Spleen (tissue), 13 donors: ENCODE measurements at regions of chr2 and their contacts with region 1.

Region 1: DNA sequence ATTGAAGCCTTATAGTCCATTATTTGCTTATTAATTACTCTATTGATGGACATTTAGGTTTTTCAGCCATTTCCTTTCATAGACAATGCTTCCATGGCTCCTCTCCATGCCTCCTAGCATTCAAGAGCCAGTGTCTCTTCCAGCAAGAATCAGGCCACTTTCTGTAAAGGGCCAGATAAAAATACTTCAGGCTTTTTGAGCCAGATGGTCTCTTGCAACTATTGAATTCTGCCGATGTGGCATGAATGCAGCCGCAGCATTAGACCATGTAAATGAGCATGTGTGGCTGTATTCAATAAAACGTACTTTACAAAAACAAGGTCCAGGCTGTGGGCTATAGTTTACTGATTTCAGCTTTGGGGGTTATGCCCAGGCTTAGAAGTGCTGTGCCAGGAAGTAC is 38.5 kb downstream of the TRAF3IP1 start:
- DNase-seq: no peak
- H3K4me3 ChIP-seq: no peak overlapping the region
- H3K27ac ChIP-seq: no peak overlapping the region
- H3K4me1 ChIP-seq: peaks cover 0 to 4% (median 0%) of the 10 kb centered on the region in 6 donors
- H3K27me3 ChIP-seq: no peaks in the 10 kb centered on the region
- CTCF ChIP-seq: no peak
- POLR2A ChIP-seq: no peak

Region 2: GRCh38 chr2:237841051-237841450 is 517.7 kb before region 1 on chr2:
- intact Hi-C with region 1: no loop called
- DNase-seq: no peak
- H3K4me3 ChIP-seq: no peak overlapping the region
- H3K27ac ChIP-seq: no peak overlapping the region
- H3K4me1 ChIP-seq: no peaks in the 10 kb centered on the region
- H3K27me3 ChIP-seq: no peaks in the 10 kb centered on the region
- CTCF ChIP-seq: no peak
- POLR2A ChIP-seq: no peak

Region 3: GRCh38 chr2:238462782-238463396 is 104.1 kb after region 1 on chr2:
- intact Hi-C with region 1: loop called (anchors 5 kb)
- DNase-seq: no peak
- H3K4me3 ChIP-seq: no peak overlapping the region
- H3K27ac ChIP-seq: no peak overlapping the region
- H3K4me1 ChIP-seq: no peaks in the 10 kb centered on the region
- H3K27me3 ChIP-seq: no peaks in the 10 kb centered on the region
- CTCF ChIP-seq: peak; percentile 48 to 86 (median 73)
- POLR2A ChIP-seq: no peak